Activated CD4-positive, alpha-beta memory T cell treated with anti-CD3 and anti-CD28 coated beads, Interleukin-2, amount 10 ng/mL, durations not matched to agents 7 days and 5 days (primary cell): ENCODE measurements at regions of chr5 and their contacts with region 1.

Region 1: DNA sequence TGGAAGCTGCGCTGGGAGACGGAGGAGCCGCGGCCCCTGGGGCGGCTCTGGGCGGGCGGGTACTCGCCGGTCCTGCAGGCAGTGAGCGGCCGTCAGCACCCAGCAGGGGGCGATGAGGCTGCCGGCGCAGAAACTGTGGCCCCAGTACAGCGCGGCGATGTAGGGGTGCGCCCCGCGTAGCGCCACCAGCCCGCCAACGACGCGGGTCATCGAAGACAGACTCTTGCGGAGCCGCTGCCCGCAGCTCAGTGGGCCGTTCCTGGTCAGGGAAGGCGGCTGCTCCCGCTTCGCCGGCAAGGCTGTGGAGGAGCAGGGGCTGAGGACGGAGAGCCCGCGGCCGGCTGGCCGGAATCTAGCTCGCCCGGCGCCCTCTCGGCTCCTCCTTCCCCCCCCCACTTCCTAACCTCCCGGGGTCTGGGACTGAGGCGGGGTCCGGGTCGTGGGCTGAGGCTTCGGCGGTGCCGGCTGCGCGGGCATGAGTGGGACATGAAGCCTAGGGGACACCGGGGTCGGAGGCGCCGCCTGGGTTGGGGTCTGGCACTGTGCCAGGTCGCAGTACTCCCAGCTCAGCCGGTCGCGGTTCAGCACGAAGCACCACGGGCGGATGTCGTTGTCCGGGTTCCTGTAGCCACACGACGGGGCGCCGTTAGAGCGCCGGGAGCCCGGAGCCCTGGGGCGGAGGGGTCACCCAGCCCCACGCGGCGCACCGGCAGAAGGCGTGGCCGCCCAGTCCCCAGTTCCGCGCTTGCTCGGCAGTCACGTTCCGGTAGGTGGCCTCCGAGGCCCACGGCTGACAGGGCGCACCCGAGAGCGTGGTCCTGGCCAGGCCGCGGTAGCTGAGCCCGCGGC is 3.6 kb upstream of the PFN3 start:
- DNase-seq: peak; percentile 86
- H3K4me3 Mint-ChIP-seq: peak overlapping the region; percentile 75
- H3K27ac Mint-ChIP-seq: no peak overlapping the region
- H3K4me1 Mint-ChIP-seq: peaks cover 39% of the 10 kb centered on the region
- H3K27me3 Mint-ChIP-seq: peaks cover 36% of the 10 kb centered on the region

Region 2: GRCh38 chr5:177113566-177114424 is 290.2 kb before region 1 on chr5:
- CTCF ChIA-PET with region 1: interaction called, 15 read pairs
- POLR2A ChIA-PET with region 1: no interaction called
- DNase-seq: peak; percentile 83
- H3K4me3 Mint-ChIP-seq: no peak overlapping the region
- H3K27ac Mint-ChIP-seq: no peak overlapping the region
- H3K4me1 Mint-ChIP-seq: peaks cover 25% of the 10 kb centered on the region
- H3K27me3 Mint-ChIP-seq: no peaks in the 10 kb centered on the region

Region 3: DNA sequence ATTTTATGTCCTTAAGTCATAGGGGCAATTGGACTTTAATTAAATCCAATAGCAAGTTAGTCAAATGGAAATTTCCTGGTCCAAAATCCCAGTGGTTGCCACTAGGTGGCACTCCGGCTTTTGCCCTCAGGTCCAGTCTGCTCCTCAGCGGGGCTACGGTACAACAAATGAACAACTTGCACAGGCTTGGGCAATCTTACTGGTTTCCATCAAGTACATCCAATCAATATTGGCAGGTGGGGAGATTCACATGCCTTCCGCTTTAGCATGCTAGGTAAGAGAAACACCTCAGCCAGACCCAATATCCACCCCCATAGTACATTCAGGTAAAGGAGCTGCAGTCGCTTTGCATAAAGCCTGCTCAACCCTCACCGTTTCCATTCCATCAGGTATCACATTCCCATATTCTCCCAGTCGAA is 86.0 kb before region 1 on chr5:
- CTCF ChIA-PET with region 1: interaction called, 47 read pairs
- POLR2A ChIA-PET with region 1: interaction called, 30 read pairs
- DNase-seq: peak; percentile 81
- H3K4me3 Mint-ChIP-seq: no peak overlapping the region
- H3K27ac Mint-ChIP-seq: no peak overlapping the region
- H3K4me1 Mint-ChIP-seq: peaks cover 53% of the 10 kb centered on the region
- H3K27me3 Mint-ChIP-seq: no peaks in the 10 kb centered on the region

Region 4: DNA sequence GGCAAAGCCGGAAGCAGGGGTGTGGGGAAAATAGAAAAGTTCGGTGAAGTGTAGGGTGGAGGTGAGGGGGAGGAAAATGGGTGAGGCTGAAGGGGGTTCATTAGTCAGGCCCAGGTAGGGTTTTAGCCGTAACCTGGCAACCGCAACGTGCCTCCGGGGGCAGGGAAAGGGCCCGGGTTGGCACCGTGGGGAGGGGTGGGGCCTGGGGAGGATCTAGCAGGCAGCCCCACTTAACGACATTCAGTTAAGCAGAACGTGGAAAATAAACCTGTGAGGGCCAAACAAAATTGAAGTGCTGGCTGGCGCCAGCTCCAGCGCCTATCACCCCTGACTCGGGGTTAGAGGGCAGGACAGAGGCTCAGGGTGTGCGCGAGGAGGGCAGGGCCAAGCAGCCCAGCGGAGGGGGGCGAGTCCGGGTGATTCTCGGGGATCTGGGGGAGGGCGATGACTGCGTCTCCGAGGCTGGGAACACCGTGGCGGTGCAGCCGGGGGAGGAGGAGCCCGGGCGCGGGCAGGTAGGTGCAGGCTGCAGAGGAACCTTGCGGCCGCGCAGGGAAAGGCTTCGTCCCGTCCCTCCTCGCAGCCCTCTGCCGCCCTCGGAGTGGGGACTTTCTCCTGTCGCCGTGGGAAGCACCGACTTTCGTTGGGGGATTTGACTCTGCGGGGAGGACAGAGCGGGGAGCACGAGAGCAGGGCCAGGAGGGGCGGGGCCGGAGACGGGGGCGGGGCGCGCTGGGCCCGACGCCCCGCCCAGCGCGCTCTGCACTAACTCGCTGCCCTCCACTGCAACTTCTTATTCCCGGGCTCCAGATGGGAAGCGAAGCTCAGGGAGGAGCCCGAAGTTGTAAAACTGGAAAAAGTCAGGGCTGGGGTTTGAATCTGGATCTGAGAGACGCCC is 41.2 kb before region 1 on chr5:
- CTCF ChIA-PET with region 1: interaction called, 11 read pairs
- POLR2A ChIA-PET with region 1: interaction called, 3 read pairs
- DNase-seq: peak; percentile 57
- H3K4me3 Mint-ChIP-seq: peak overlapping the region; percentile 66
- H3K27ac Mint-ChIP-seq: no peak overlapping the region
- H3K4me1 Mint-ChIP-seq: peaks cover 72% of the 10 kb centered on the region
- H3K27me3 Mint-ChIP-seq: no peaks in the 10 kb centered on the region

Region 5: GRCh38 chr5:177425801-177426565 is 22.0 kb after region 1 on chr5:
- CTCF ChIA-PET with region 1: interaction called, 235 read pairs
- POLR2A ChIA-PET with region 1: interaction called, 463 read pairs
- DNase-seq: peak; percentile 100
- H3K4me3 Mint-ChIP-seq: peak overlapping the region; percentile 95
- H3K27ac Mint-ChIP-seq: peak overlapping the region; percentile 98
- H3K4me1 Mint-ChIP-seq: peaks cover 44% of the 10 kb centered on the region
- H3K27me3 Mint-ChIP-seq: no peaks in the 10 kb centered on the region

Region 6: GRCh38 chr5:177446200-177447065 is 42.4 kb after region 1 on chr5 and contains the start of gene PRR7:
- CTCF ChIA-PET with region 1: interaction called, 467 read pairs
- POLR2A ChIA-PET with region 1: interaction called, 371 read pairs
- DNase-seq: peak; percentile 74
- H3K4me3 Mint-ChIP-seq: peak within 1 kb of the TSS; percentile 70
- H3K27ac Mint-ChIP-seq: peak within 1 kb of the TSS; percentile 80
- H3K4me1 Mint-ChIP-seq: peaks cover 51% of the 10 kb centered on the region
- H3K27me3 Mint-ChIP-seq: peaks cover 10% of the 10 kb centered on the region
- total RNA-seq, gene PRR7: 4.9 to 5.8 TPM

Region 7: GRCh38 chr5:177484902-177485549 is 81.0 kb after region 1 on chr5:
- CTCF ChIA-PET with region 1: no interaction called
- POLR2A ChIA-PET with region 1: no interaction called
- DNase-seq: no peak
- H3K4me3 Mint-ChIP-seq: no peak overlapping the region
- H3K27ac Mint-ChIP-seq: no peak overlapping the region
- H3K4me1 Mint-ChIP-seq: peaks cover 1% of the 10 kb centered on the region
- H3K27me3 Mint-ChIP-seq: no peaks in the 10 kb centered on the region

Region 8: DNA sequence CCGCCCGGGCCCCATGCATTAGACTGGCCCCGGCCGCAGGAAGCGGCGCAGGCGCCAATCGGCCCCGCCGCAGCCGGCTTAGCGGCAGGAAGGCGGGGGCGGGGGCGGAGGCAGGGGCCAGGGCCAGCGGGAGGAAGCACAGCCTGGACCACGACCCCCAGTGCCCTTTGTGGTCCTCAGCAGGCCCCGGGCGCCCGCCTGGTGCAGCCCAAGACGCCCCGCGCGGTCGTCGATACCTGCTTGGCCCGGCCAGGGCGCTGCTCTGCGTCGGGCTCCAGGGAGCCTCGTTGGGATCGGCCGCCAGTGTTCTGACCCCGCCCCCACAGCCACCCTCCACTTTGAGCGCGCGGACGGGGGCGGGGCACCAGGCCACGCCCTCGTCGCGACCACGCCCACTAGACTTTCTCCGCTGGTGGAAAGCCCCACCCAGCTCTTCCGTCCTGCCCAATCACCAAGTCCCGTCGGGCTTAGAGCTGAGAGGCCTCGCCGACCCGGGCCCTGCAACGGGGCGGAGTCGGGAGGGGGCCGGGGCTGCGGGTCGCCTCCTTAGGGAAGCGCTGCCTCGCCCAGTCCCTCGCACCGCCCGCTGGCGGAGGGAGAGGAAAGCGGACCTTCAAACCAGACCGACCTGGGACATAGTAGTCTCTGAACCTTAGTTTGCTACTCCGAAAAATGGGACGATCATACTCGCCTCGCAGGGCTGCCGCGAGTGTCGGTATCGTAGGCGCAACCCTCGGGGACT is 93.4 kb after region 1 on chr5 and contains the start of gene PDLIM7:
- CTCF ChIA-PET with region 1: interaction called, 37 read pairs
- POLR2A ChIA-PET with region 1: interaction called, 10 read pairs
- DNase-seq: peak; percentile 96
- H3K4me3 Mint-ChIP-seq: peak within 1 kb of the TSS; percentile 85
- H3K27ac Mint-ChIP-seq: peak within 1 kb of the TSS; percentile 42
- H3K4me1 Mint-ChIP-seq: peaks cover 49% of the 10 kb centered on the region
- H3K27me3 Mint-ChIP-seq: peaks cover 21% of the 10 kb centered on the region
- total RNA-seq, gene PDLIM7: 55.1 to 56.6 TPM